Endothelial cell of umbilical vein (primary cell): ENCODE measurements at regions of chr14 and their contacts with region 1.

Region 1: DNA sequence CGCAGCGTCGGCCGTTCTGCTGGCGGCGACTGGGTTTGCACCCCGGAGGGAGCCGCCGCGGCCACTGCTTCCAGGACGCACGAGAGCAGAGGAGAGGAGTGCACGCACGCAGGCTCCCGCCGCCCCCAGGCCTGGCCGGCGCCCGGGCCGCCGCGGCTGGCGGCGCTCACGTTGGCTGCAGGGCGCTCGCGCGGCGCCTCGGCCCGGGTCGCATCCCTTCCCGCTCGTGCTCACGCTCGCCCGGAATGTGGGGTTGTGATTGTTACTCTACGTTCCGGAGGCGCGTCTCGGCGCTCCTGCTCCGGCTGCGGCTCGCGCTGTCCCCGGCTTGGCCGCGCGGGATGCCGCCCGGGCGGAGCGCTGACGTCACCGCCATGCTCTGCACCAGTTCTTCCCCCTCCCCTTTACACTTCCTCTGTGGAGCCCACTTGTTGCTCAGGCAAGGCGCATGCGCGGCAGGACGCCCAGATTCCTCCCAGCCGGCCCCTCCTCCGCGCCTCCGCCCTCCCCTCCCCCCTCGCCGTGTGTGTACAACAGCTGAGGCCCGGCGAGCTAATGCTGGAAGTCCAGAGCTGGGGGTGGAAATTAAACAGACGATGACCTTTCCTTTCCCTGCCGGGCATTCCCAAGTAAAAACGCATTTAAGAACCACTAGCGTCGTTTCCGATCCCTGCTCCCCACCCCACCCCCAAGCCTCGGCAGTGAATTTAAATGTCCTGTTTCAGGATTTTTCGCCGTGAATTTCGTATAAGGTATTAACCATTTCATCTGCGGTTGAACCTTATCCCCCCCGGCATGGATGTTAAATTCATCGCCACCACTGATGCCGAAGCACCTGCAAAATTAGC is at the start of gene IRF2BPL:
- DNase-seq: peak; percentile 99
- H3K4me3 ChIP-seq: peak within 1 kb of the TSS; percentile 24 to 90 (median 54)
- H3K27ac ChIP-seq: peak within 1 kb of the TSS; percentile 93
- H3K4me1 ChIP-seq: peaks cover 48% of the 10 kb centered on the region
- H3K27me3 ChIP-seq: no peaks in the 10 kb centered on the region
- CTCF ChIP-seq: no peak
- POLR2A ChIP-seq: peak; percentile 96
- total RNA-seq, gene IRF2BPL: 23.1 and 23.3 TPM in 2 replicates

Region 2: DNA sequence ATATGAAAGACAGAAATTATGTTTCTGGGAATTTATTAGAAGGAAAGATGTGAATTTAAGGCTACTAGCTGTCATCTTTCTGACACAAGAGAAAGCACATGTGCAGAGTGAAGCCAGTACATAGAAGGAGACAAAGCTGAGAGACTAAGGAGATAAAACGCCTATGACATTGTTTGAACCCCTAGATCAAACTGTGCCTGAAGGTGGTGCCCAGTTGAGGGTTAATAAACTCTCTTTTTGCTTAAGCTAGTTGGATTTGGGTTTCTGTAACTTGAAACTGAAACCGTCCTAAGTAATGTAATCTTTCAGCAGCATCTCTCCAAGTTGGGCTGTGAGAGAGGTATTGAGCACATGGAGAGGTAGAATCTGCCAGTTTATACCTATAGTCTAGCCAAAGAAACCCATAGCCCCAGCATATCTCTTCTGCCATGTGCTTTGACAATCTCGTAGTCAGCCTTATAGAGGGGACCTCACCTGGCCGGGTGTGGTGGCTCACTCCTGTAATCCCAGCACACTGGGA is 118.2 kb before region 1 on chr14:
- CTCF ChIA-PET with region 1: interaction called, 46 read pairs
- POLR2A ChIA-PET with region 1: no interaction called
- dilution Hi-C with region 1: no loop called
- intact Hi-C with region 1: loop called (anchors 1 kb)
- DNase-seq: no peak
- H3K4me3 ChIP-seq: no peak overlapping the region
- H3K27ac ChIP-seq: no peak overlapping the region
- H3K4me1 ChIP-seq: peaks cover 3% of the 10 kb centered on the region
- H3K27me3 ChIP-seq: no peaks in the 10 kb centered on the region
- CTCF ChIP-seq: no peak
- POLR2A ChIP-seq: no peak

Region 3: GRCh38 chr14:76962303-76962660 is 66.3 kb before region 1 on chr14:
- CTCF ChIA-PET with region 1: interaction called, 18 read pairs
- POLR2A ChIA-PET with region 1: interaction called, 6 read pairs
- dilution Hi-C with region 1: no loop called
- intact Hi-C with region 1: no loop called
- DNase-seq: no peak
- H3K4me3 ChIP-seq: peak overlapping the region in 1 of 3 experiments; percentile 43
- H3K27ac ChIP-seq: peak overlapping the region; percentile 76
- H3K4me1 ChIP-seq: peaks cover 43% of the 10 kb centered on the region
- H3K27me3 ChIP-seq: no peaks in the 10 kb centered on the region
- CTCF ChIP-seq: no peak
- POLR2A ChIP-seq: no peak

Region 4: GRCh38 chr14:77053046-77053841 is 24.6 kb after region 1 on chr14:
- CTCF ChIA-PET with region 1: interaction called, 46 read pairs
- POLR2A ChIA-PET with region 1: interaction called, 6 read pairs
- dilution Hi-C with region 1: no loop called
- intact Hi-C with region 1: loop called (anchors 1 kb)
- DNase-seq: peak; percentile 81
- H3K4me3 ChIP-seq: no peak overlapping the region
- H3K27ac ChIP-seq: peak overlapping the region; percentile 6
- H3K4me1 ChIP-seq: peaks cover 11% of the 10 kb centered on the region
- H3K27me3 ChIP-seq: no peaks in the 10 kb centered on the region
- CTCF ChIP-seq: peak; percentile 95 to 96
- POLR2A ChIP-seq: no peak

Region 5: DNA sequence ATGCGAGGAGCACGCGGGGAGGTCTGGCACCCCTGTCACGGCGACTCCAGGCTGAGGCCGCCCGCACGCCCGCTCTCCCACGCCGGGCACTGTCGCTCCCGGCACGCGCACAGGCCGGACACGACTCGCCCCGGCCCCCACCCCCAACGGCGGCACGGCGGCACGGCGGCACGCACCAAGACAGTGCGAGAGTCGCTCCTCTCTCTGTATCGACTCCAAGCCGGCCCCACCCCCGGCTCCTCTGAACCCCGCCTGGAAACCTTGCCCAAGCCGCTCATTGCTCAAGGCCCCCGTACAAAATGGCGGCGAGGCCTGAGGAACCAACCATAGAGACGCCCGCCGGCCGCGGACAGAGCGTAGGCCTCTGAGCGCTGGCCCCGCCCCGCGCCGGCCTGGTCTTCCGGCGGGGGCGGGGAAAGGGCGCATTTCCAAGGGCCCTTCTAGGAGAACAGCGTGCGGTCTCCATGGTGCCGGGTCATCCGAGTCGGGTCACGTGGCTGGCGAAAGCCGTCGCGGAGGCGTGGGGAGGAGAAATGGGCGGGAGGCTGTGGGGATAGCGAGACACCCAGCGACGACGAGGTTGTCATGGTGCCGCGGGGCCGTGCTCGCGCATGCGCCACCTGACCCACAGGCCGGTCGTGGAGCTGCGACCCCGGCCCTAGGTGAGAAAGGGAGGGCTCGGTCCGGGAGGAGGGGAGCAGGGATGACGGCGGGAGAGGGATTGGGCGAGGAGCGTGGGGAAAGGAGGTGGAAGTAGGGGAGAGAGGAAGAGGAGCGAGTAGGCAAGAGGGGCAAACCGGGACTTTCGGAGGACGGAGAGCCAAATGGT is 69.3 kb after region 1 on chr14 and contains the start of gene CIPC:
- CTCF ChIA-PET with region 1: interaction called, 4 read pairs
- POLR2A ChIA-PET with region 1: no interaction called
- dilution Hi-C with region 1: no loop called
- intact Hi-C with region 1: loop called (anchors 2 kb)
- DNase-seq: peak; percentile 99
- H3K4me3 ChIP-seq: peak within 1 kb of the TSS; percentile 30 to 72 (median 66)
- H3K27ac ChIP-seq: peak within 1 kb of the TSS; percentile 57
- H3K4me1 ChIP-seq: peaks cover 27% of the 10 kb centered on the region
- H3K27me3 ChIP-seq: no peaks in the 10 kb centered on the region
- CTCF ChIP-seq: no peak
- POLR2A ChIP-seq: no peak
- total RNA-seq, gene CIPC: 17.4 and 17.7 TPM in 2 replicates